PC-3 (cell line): ENCODE measurements at regions of chr3 and their contacts with region 1.

Region 1: DNA sequence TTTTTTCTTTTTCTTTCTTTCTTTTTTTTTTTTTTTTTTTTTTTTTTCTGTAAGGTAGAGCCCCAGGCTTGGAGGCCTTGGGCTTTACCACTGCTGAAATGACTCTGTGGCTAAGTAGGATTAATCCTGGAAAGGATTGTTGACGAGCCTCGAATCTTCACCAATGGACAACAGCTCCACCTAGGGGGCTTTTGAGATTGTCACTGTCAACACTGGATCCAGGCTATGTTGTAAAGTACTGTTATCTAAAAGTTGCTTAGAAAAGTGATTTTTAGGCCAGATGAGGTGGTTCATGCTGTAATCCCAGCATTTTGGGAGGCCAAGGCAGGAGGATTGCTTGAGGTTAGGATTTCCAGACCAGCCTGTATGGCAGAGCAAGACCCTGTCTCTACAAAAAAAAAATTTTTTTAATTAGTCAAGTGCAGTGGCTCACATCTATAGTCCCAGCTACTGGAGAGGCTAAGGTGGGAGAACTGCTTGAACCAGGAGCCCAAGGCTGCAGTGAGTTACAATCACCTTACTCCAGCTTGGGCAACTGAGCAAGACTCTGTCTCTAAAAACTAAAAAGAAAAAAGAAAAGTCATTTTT is 41.6 kb downstream of the KLHL18 start:
- DNase-seq: peak; percentile 90
- ATAC-seq: peak; percentile 80
- H3K4me3 ChIP-seq: no peak overlapping the region
- H3K27ac ChIP-seq: peak overlapping the region; percentile 63
- H3K4me1 ChIP-seq: peaks cover 14% of the 10 kb centered on the region
- H3K27me3 ChIP-seq: no peaks in the 10 kb centered on the region
- CTCF ChIP-seq: peak; percentile 80

Region 2: GRCh38 chr3:47164007-47164881 is 160.1 kb before region 1 on chr3 and contains the start of gene SETD2:
- CTCF ChIA-PET with region 1: no interaction called
- POLR2A ChIA-PET with region 1: no interaction called
- intact Hi-C with region 1: loop called (anchors 10 kb)
- DNase-seq: peak; percentile 93
- ATAC-seq: peak; percentile 86
- H3K4me3 ChIP-seq: peak within 1 kb of the TSS; percentile 79
- H3K27ac ChIP-seq: peak within 1 kb of the TSS; percentile 55
- H3K4me1 ChIP-seq: peaks cover 15% of the 10 kb centered on the region
- H3K27me3 ChIP-seq: no peaks in the 10 kb centered on the region
- CTCF ChIP-seq: peak; percentile 49
- total RNA-seq, gene SETD2: 23.6 and 24.1 TPM in 2 replicates

Region 3: DNA sequence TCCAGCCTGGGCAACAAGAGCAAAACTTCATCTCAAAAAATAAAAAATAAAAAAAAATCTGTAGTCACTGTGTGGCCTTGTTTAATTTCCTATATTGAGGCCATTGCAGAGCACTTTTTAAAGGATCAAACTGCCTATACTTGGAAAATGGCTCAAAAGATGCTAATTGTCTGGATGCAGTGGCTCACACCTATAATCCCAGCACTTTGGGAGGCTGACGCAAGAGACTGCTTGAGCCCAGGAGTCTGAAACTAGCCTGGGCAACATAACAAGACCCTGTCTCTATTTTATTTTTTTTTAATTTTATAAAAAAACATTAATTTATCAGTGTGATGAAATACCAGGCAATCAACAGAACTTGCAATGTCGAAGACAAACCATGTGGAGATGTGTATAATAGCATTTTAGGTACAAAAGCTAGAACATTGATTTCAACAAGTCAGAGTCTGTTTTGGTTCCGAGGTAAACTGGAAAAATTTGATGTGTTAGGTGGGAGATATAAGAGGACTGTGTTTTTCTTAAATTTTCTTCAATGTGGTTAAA is 113.4 kb before region 1 on chr3:
- CTCF ChIA-PET with region 1: no interaction called
- POLR2A ChIA-PET with region 1: no interaction called
- intact Hi-C with region 1: no loop called
- DNase-seq: no peak
- ATAC-seq: no peak
- H3K4me3 ChIP-seq: no peak overlapping the region
- H3K27ac ChIP-seq: no peak overlapping the region
- H3K4me1 ChIP-seq: no peaks in the 10 kb centered on the region
- H3K27me3 ChIP-seq: no peaks in the 10 kb centered on the region
- CTCF ChIP-seq: no peak

Region 4: DNA sequence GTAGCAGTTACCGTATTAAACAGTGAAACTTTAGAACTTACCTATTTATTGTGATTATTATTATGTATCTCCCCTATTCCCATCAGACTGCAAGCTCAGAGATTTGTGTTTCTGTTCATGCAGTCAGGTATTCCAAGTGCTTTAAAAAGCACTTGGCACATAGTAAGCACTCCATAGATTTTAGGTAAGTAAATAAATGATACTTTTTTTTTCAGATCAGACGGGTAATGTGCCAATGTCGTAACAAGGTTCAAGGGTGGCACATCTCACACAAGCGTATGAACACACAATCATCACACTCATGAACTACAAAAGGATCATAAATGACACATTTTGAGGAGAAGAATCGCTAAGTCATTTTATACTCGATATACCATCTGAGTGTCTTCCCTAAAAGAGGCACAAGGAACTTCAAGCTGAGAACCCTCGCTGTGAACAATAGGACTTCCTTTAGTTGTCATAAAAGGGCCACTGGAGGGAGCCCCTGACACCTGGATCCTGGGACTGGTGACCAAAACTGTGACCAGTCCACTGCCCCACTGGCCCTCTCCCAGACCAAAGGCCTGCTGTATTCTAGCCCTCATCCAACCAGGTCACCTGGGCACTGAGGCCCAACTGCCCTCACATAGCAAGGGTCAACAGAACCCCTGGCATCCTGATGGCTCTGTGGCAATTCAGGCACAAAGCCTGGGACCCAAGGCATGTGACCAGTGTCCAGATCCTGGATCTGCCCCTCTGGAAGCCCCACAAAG is 73.9 kb before region 1 on chr3:
- CTCF ChIA-PET with region 1: interaction called, 11 read pairs
- POLR2A ChIA-PET with region 1: no interaction called
- intact Hi-C with region 1: loop called (anchors 1 kb)
- DNase-seq: peak; percentile 61
- ATAC-seq: peak; percentile 97
- H3K4me3 ChIP-seq: no peak overlapping the region
- H3K27ac ChIP-seq: no peak overlapping the region
- H3K4me1 ChIP-seq: no peaks in the 10 kb centered on the region
- H3K27me3 ChIP-seq: no peaks in the 10 kb centered on the region
- CTCF ChIP-seq: peak; percentile 76